GM12878 (cell line): ENCODE measurements at regions of chr4 and their contacts with region 1.

Region 1: DNA sequence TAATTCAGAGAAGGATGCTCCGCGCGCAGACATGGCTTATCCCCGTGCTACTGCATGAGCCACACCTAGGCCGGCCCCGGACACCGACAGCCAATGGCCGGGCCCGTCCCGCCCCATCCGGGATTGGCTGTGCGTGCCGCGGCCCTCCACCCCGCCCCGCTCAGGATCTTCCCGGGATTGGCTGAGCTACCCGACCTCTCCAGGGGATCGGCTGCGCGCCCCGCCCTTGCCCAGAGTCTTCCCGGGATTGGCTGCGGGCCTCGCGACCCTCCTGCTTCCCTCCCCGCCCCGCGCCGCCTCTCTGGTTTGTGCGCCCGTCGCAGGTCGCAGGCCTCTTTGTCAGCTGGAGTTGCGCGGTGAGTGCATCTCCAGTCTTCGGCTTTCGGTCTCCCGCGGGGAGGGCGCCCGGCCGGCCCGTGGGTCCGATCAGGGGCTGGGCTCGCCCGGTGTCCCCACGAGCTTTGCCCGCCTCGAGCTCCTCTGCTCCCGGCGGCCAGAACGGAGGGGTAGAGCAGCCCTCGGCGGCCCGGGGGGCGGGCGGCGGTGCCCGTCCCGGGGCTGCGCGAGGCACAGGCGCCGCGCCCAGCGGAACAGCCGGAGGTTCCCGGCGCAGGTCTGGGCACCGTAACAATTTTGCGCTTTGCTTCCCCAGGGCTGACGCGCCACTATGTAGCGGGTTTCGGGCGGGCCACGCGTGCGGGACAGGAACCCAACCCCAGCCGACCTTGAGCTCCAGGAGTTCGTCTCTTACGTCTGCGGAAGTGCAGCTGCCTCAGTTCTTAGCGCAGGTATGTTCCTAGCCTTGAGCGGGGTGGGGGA is 38.8 kb downstream of the ERVMER34-1 start:
- DNase-seq: peak; percentile 85
- ATAC-seq: peak; percentile 93
- H3K4me3 ChIP-seq: peak overlapping the region; percentile 93
- H3K27ac ChIP-seq: peak overlapping the region; percentile 93
- H3K4me1 ChIP-seq: peaks cover 40% of the 10 kb centered on the region
- H3K27me3 ChIP-seq: no peaks in the 10 kb centered on the region
- CTCF ChIP-seq: no peak
- EP300 ChIP-seq: 0 out of 4 replicates have a peak, but pooled peaks of 1 of the 2 experiments have one; percentile 16
- POLR2A ChIP-seq: peak; percentile 99
- RAD21 ChIP-seq: no peak

Region 2: GRCh38 chr4:52643785-52644244 is 68.6 kb before region 1 on chr4:
- CTCF ChIA-PET with region 1: no interaction called
- POLR2A ChIA-PET with region 1: interaction called, 7 read pairs
- RAD21 ChIA-PET with region 1: interaction called, 6 read pairs
- SMC1A ChIA-PET with region 1: interaction called, 4 read pairs
- in situ Hi-C with region 1: no loop called
- intact Hi-C with region 1: loop called (anchors 5 kb)
- DNase-seq: no peak
- ATAC-seq: peak; percentile 54
- H3K4me3 ChIP-seq: peak overlapping the region; percentile 1; the same call in 1 of the 2 replicates
- H3K27ac ChIP-seq: peak overlapping the region; percentile 61
- H3K4me1 ChIP-seq: peaks cover 52% of the 10 kb centered on the region
- H3K27me3 ChIP-seq: no peaks in the 10 kb centered on the region
- CTCF ChIP-seq: no peak
- EP300 ChIP-seq: no peak
- POLR2A ChIP-seq: no peak
- RAD21 ChIP-seq: no peak

Region 3: GRCh38 chr4:52701207-52701606 is 11.2 kb before region 1 on chr4:
- CTCF ChIA-PET with region 1: interaction called, 6 read pairs
- POLR2A ChIA-PET with region 1: interaction called, 18 read pairs
- RAD21 ChIA-PET with region 1: interaction called, 12 read pairs
- SMC1A ChIA-PET with region 1: interaction called, 16 read pairs
- in situ Hi-C with region 1: no loop called
- intact Hi-C with region 1: no loop called
- DNase-seq: peak; percentile 75
- ATAC-seq: peak; percentile 95
- H3K4me3 ChIP-seq: no peak overlapping the region
- H3K27ac ChIP-seq: peak overlapping the region; percentile 5
- H3K4me1 ChIP-seq: peaks cover 9% of the 10 kb centered on the region
- H3K27me3 ChIP-seq: no peaks in the 10 kb centered on the region
- CTCF ChIP-seq: no peak
- EP300 ChIP-seq: peak in 1 of 2 experiments; percentile 65; a peak in 1 of 4 replicates
- POLR2A ChIP-seq: no peak
- RAD21 ChIP-seq: no peak

Region 4: DNA sequence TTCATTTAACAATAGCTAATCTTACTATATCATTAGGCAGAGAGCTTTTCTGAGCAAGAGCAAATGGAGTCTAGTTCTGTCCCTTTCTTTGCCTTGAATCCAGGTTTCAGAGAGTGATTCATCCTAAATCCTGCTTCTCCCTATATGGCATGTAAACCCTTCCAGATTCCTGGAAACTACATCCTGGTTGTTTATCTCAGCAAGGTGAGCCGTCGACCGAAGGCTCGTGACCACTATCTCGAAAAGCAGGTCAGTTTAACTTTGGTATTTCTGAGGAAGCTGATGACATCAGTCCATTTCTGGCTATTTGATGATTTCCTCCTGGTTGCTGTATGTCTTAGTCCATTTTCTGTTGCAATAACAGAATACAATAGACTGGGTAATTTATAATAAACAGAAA is 79.6 kb after region 1 on chr4:
- CTCF ChIA-PET with region 1: no interaction called
- POLR2A ChIA-PET with region 1: no interaction called
- RAD21 ChIA-PET with region 1: no interaction called
- SMC1A ChIA-PET with region 1: no interaction called
- in situ Hi-C with region 1: no loop called
- intact Hi-C with region 1: no loop called
- DNase-seq: no peak
- ATAC-seq: no peak
- H3K4me3 ChIP-seq: no peak overlapping the region
- H3K27ac ChIP-seq: no peak overlapping the region
- H3K4me1 ChIP-seq: no peaks in the 10 kb centered on the region
- H3K27me3 ChIP-seq: no peaks in the 10 kb centered on the region
- CTCF ChIP-seq: no peak
- EP300 ChIP-seq: no peak
- POLR2A ChIP-seq: no peak
- RAD21 ChIP-seq: no peak

Region 5: DNA sequence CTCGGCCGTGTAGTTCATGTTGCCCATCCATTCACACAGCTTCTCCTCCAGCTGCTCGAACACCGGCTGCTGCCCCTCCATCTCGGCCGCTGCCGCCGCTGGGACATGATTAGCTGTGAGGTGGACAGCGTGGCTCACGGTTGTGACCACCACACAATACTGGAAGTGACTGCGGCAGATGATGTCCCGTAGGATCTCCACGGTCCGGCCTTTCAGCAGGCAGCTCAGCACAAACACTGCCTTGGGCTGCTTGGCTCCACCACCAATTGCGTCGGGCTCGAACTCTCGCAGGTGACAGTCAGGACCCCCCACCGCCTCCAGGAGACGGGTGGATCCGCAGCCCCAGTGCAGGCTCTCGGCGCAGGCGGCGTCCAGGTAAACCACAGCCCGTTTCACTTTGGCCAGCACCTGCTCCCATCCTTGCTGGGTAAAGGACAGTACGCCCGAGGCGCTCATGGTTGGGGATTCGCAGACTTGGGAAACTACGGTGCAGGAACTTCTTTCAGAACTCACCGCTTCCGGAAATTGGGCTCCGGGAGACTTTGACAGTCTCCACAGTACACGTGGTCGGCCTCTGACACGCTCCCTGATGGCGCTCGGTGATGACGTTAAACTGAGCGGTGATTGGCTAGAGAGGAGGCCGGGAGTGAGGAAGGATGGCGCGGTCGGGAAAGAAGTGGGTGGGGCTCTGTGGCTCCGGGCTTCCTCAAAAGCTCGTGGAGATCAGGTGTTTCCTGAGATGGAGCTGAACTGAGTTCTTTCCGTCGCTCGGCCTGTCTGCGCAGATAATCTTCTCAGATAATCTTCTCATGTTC is 653.3 kb after region 1 on chr4 and contains the start of gene SCFD2:
- CTCF ChIA-PET with region 1: no interaction called
- POLR2A ChIA-PET with region 1: no interaction called
- RAD21 ChIA-PET with region 1: no interaction called
- SMC1A ChIA-PET with region 1: no interaction called
- in situ Hi-C with region 1: loop called (anchors 25 kb)
- intact Hi-C with region 1: no loop called
- DNase-seq: peak; percentile 91
- ATAC-seq: peak; percentile 94
- H3K4me3 ChIP-seq: peak within 1 kb of the TSS; percentile 95
- H3K27ac ChIP-seq: peak within 1 kb of the TSS; percentile 81
- H3K4me1 ChIP-seq: no peaks in the 10 kb centered on the region
- H3K27me3 ChIP-seq: no peaks in the 10 kb centered on the region
- CTCF ChIP-seq: no peak
- EP300 ChIP-seq: peak in 1 of 2 experiments; percentile 36; a peak in 1 of 4 replicates
- POLR2A ChIP-seq: peak; percentile 80
- RAD21 ChIP-seq: no peak
- polyA plus RNA-seq, gene SCFD2: 4.8 to 7.2 TPM

Region 6: GRCh38 chr4:54064295-54065111 is 1352.1 kb after region 1 on chr4 and contains the start of gene CHIC2:
- CTCF ChIA-PET with region 1: no interaction called
- POLR2A ChIA-PET with region 1: no interaction called
- RAD21 ChIA-PET with region 1: no interaction called
- SMC1A ChIA-PET with region 1: no interaction called
- in situ Hi-C with region 1: no loop called
- intact Hi-C with region 1: loop called (anchors 10 kb)
- DNase-seq: peak; percentile 63
- ATAC-seq: peak; percentile 92
- H3K4me3 ChIP-seq: peak within 1 kb of the TSS; percentile 91
- H3K27ac ChIP-seq: peak within 1 kb of the TSS; percentile 68
- H3K4me1 ChIP-seq: no peaks in the 10 kb centered on the region
- H3K27me3 ChIP-seq: no peaks in the 10 kb centered on the region
- CTCF ChIP-seq: no peak
- EP300 ChIP-seq: 0 out of 4 replicates have a peak, but pooled peaks of 1 of the 2 experiments have one; percentile 23
- POLR2A ChIP-seq: peak; percentile 95
- RAD21 ChIP-seq: no peak
- polyA plus RNA-seq, gene CHIC2: 0.80 to 2.8 TPM